CD4-positive, alpha-beta memory T cell (primary cell): ENCODE measurements at regions of chr3 and their contacts with region 1.

Region 1: GRCh38 chr3:111668912-111669488 is 73.9 kb upstream of the ZBED2 start:
- DNase-seq: peak in 4 of 5 donors; percentile 55 to 60 (median 58)
- H3K4me3 ChIP-seq: no peak overlapping the region
- H3K4me3 Mint-ChIP-seq: peak overlapping the region in 5 of 8 donors; percentile 26 to 74 (median 38)
- H3K27ac ChIP-seq: peak overlapping the region; percentile 18
- H3K27ac Mint-ChIP-seq: peak overlapping the region; percentile 24 to 93 (median 87)
- H3K4me1 ChIP-seq: peaks cover 68% of the 10 kb centered on the region
- H3K4me1 Mint-ChIP-seq: peaks cover 51 to 84% (median 67%) of the 10 kb centered on the region in 4 donors
- H3K27me3 ChIP-seq: no peaks in the 10 kb centered on the region
- H3K27me3 Mint-ChIP-seq: no peaks in the 10 kb centered on the region

Region 2: DNA sequence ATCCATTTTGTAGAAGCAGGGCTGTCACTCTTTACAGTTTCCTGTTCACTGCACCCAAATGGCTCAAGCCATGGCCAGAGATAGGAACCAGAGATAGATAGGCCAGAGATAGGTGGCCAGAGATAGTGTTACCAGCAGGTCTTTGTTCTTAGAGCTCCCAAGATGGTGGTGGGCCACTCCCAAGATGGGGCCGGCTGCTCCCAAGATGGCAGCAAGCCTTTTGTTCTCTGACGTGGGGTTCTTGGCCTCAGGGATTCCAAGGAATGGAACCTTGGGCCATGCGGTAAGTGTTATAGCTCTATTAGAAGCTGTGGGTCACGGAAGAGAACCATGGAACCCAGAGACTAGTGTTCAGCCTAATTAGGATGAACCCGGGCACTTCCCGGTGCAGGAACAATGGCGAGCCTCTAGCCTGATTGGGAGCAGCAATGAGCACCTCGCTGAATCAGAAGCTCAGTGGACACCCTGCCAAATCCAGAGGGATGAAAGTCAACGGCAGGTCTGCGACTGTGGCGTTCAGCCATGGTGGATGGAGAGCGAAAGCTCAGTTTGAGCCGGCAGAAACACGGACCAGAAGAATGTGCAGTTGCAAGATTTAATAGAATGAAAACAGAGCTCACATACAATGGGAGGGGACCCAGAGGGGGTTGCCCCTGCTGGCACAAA is 172.0 kb before region 1 on chr3:
- CTCF ChIA-PET with region 1: no interaction called
- POLR2A ChIA-PET with region 1: no interaction called
- intact Hi-C with region 1: no loop called
- DNase-seq: no peak
- H3K4me3 ChIP-seq: no peak overlapping the region
- H3K4me3 Mint-ChIP-seq: no peak overlapping the region
- H3K27ac ChIP-seq: no peak overlapping the region
- H3K27ac Mint-ChIP-seq: peak overlapping the region in 1 of 7 donors; percentile 29
- H3K4me1 ChIP-seq: no peaks in the 10 kb centered on the region
- H3K4me1 Mint-ChIP-seq: no peaks in the 10 kb centered on the region
- H3K27me3 ChIP-seq: no peaks in the 10 kb centered on the region
- H3K27me3 Mint-ChIP-seq: no peaks in the 10 kb centered on the region

Region 3: DNA sequence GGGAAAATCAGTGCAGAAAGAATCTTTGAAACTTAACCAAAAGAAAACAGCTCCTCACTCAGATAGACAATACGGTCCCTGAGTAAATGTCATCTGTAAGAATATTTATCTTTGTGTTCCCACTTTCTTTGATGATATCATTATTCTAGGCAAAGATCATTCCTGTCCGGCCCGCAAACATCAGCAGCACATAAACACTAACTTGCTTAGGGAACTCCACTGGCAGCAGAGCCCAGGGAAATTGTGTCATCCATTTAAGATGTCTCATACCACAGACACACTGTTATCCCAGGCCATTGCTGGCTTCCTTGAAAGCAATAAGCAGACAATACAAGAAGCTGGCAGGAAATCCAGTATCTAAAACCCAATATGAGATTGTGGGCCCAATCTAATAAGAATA is 147.1 kb before region 1 on chr3:
- CTCF ChIA-PET with region 1: no interaction called
- POLR2A ChIA-PET with region 1: no interaction called
- intact Hi-C with region 1: no loop called
- DNase-seq: no peak
- H3K4me3 ChIP-seq: no peak overlapping the region
- H3K4me3 Mint-ChIP-seq: no peak overlapping the region
- H3K27ac ChIP-seq: no peak overlapping the region
- H3K27ac Mint-ChIP-seq: no peak overlapping the region
- H3K4me1 ChIP-seq: no peaks in the 10 kb centered on the region
- H3K4me1 Mint-ChIP-seq: peaks cover 0 to 2% (median under 1%) of the 10 kb centered on the region in 4 donors
- H3K27me3 ChIP-seq: no peaks in the 10 kb centered on the region
- H3K27me3 Mint-ChIP-seq: no peaks in the 10 kb centered on the region

Region 4: GRCh38 chr3:111577794-111578685 is 91.0 kb before region 1 on chr3:
- CTCF ChIA-PET with region 1: interaction called, 11 read pairs
- POLR2A ChIA-PET with region 1: no interaction called
- intact Hi-C with region 1: no loop called
- DNase-seq: peak in 4 of 5 donors; percentile 10 to 28 (median 20)
- H3K4me3 ChIP-seq: no peak overlapping the region
- H3K4me3 Mint-ChIP-seq: peak overlapping the region in 1 of 8 donors; percentile 6
- H3K27ac ChIP-seq: no peak overlapping the region
- H3K27ac Mint-ChIP-seq: peak overlapping the region in 6 of 7 donors; percentile 0 to 73 (median 46)
- H3K4me1 ChIP-seq: peaks cover 10% of the 10 kb centered on the region
- H3K4me1 Mint-ChIP-seq: peaks cover 31 to 60% (median 45%) of the 10 kb centered on the region in 4 donors
- H3K27me3 ChIP-seq: no peaks in the 10 kb centered on the region
- H3K27me3 Mint-ChIP-seq: no peaks in the 10 kb centered on the region

Region 5: DNA sequence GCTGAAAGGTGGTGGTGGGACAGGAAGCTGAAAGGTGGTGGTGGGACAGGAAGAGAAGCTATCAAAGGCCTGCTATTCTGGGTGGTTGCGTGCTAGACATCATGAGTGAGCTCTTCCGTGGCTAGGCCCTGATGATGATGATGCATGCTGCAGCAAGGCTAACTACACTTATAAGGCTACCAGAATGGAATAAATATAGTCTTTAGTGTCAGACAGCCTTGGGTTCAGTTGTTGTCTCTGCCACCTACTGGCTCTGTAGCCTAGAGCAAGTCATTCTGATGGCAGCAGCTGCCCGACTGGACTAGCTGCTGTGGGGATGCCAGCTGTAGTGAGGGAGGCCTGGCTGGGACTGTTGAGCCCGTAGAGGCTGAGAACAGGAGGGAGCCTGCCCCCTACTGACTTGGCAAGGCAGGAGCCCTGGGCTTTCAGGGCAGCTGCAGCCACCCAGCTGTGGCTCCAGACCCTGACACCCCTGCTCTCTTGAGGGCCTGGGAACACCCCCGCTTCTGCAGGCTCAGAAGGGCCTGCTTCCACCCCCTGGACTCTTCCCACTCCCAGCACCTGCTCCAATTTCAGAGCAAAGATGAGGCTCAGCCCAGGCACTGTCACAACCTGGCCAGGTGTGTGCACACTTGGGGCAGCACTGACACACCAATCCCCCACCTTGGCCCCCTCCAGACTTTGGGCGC is 52.4 kb before region 1 on chr3:
- CTCF ChIA-PET with region 1: interaction called, 32 read pairs
- POLR2A ChIA-PET with region 1: interaction called, 24 read pairs
- intact Hi-C with region 1: no loop called
- DNase-seq: peak; percentile 60 to 85 (median 71)
- H3K4me3 ChIP-seq: no peak overlapping the region
- H3K4me3 Mint-ChIP-seq: peak overlapping the region in 7 of 8 donors; percentile 43 to 73 (median 62)
- H3K27ac ChIP-seq: peak overlapping the region; percentile 53
- H3K27ac Mint-ChIP-seq: peak overlapping the region; percentile 89 to 98 (median 92)
- H3K4me1 ChIP-seq: peaks cover 43% of the 10 kb centered on the region
- H3K4me1 Mint-ChIP-seq: peaks cover 41 to 65% (median 50%) of the 10 kb centered on the region in 4 donors
- H3K27me3 ChIP-seq: no peaks in the 10 kb centered on the region
- H3K27me3 Mint-ChIP-seq: no peaks in the 10 kb centered on the region

Region 6: DNA sequence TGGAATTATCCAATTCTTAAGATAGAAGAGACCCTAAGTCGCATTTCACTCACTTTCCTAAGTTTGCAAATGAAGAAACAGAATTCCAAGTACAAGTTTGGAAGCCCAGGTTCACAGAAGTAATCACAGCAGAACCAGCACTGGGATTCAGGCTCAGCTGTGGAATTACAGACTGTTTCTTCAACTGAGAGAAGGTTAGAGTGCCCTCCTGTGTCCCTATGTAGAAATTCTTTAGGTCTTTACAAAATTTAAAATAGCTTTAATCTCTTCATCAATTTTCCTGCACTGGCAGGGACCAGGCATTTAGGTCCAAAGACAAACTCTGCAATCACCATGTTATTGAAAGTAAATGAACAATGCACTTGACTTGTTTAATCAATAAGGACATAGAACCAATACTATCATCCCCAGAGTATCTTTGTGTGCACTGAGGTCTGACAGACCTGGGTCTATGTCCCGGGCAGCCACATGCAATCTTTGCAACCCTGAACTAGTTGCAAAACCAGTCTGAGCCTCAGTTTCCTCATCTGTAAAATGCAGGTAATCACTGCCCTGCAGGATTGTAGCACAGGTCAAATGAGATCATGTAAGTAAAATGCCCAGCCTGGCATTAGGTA is 22.4 kb after region 1 on chr3:
- CTCF ChIA-PET with region 1: interaction called, 12 read pairs
- POLR2A ChIA-PET with region 1: interaction called, 8 read pairs
- intact Hi-C with region 1: loop called (anchors 1 kb)
- DNase-seq: peak in 2 of 5 donors; percentile 27 to 30
- H3K4me3 ChIP-seq: no peak overlapping the region
- H3K4me3 Mint-ChIP-seq: no peak overlapping the region
- H3K27ac ChIP-seq: no peak overlapping the region
- H3K27ac Mint-ChIP-seq: peak overlapping the region in 2 of 7 donors; percentile 23 to 45
- H3K4me1 ChIP-seq: peaks cover 19% of the 10 kb centered on the region
- H3K4me1 Mint-ChIP-seq: peaks cover 32 to 51% (median 39%) of the 10 kb centered on the region in 4 donors
- H3K27me3 ChIP-seq: no peaks in the 10 kb centered on the region
- H3K27me3 Mint-ChIP-seq: no peaks in the 10 kb centered on the region

Region 7: DNA sequence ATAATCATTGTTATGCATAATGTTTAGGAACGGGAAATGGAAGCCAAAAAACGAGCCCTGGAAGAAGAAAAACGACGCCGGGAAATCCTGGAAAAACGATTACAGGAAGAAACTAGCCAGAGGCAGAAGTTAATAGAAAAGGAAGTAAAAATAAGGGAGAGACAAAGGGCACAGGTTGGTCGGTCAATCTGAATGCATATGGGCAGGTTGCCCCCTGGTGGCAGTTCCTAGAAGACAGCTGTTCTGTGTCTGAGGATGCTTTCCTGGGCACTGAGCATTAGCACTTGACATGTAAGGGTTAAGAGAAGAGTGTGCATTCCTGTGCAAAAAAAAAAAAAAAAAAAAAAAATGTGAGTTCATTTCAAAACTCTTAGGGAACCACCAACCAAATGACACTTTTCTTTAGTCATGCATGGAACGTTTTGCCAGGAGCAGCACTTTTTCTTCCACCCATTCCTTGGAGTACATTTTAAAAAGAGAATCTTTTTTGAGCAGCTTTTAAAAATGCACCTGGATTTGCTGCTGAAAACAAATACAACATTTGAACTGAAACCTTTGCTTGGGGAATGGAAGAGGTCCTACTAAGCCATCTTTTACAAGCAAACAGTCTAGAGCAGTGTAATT is 298.8 kb after region 1 on chr3:
- CTCF ChIA-PET with region 1: no interaction called
- POLR2A ChIA-PET with region 1: interaction called, 6 read pairs
- intact Hi-C with region 1: loop called (anchors 1 kb)
- DNase-seq: peak; percentile 69 to 77 (median 69)
- H3K4me3 ChIP-seq: no peak overlapping the region
- H3K4me3 Mint-ChIP-seq: peak overlapping the region in 1 of 8 donors; percentile 11
- H3K27ac ChIP-seq: no peak overlapping the region
- H3K27ac Mint-ChIP-seq: peak overlapping the region in 2 of 7 donors; percentile 43 to 44
- H3K4me1 ChIP-seq: no peaks in the 10 kb centered on the region
- H3K4me1 Mint-ChIP-seq: peaks cover 2 to 6% (median 4%) of the 10 kb centered on the region in 4 donors
- H3K27me3 ChIP-seq: no peaks in the 10 kb centered on the region
- H3K27me3 Mint-ChIP-seq: no peaks in the 10 kb centered on the region

Region 8: DNA sequence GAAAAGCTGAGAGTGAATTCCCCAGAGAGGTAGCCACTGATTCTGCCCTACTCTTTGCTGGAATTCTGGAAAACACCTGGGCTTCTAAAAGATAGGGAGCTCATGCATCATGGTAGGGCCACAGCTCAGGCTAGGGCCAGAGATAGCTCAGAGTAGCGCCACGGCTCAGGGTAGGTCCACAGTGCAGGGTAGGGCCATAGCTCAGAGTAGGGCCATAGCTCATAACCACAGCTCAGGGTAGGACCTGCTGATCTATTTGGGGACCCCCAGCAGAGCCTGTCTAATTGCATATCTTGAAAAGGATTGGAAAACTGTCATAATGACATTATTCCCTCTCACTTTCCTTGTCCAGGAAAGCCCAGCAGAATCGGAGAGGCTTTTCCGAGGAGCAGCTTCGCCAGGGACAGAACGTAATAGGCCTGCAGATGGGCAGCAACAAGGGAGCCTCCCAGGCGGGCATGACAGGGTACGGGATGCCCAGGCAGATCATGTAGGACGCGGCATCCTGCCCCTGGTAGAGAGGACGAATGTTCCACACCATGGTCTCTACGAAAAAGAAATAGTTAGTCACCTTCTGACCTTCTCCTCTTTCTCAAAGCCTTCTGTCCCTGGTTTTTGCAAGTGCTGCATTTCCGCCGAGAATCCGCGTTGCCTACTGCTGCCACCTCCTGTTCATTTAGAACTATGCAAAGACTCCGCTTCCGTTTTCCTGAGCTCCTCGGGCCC is 344.2 kb after region 1 on chr3:
- CTCF ChIA-PET with region 1: interaction called, 43 read pairs
- POLR2A ChIA-PET with region 1: no interaction called
- intact Hi-C with region 1: loop called (anchors 1 kb)
- DNase-seq: peak; percentile 46 to 54 (median 51)
- H3K4me3 ChIP-seq: peak overlapping the region in 1 of 2 donors; percentile 19
- H3K4me3 Mint-ChIP-seq: peak overlapping the region in 5 of 8 donors; percentile 3 to 51 (median 33)
- H3K27ac ChIP-seq: no peak overlapping the region
- H3K27ac Mint-ChIP-seq: peak overlapping the region in 3 of 7 donors; percentile 4 to 57 (median 56)
- H3K4me1 ChIP-seq: peaks cover 4% of the 10 kb centered on the region
- H3K4me1 Mint-ChIP-seq: peaks cover 5 to 12% (median 8%) of the 10 kb centered on the region in 4 donors
- H3K27me3 ChIP-seq: no peaks in the 10 kb centered on the region
- H3K27me3 Mint-ChIP-seq: no peaks in the 10 kb centered on the region

Region 9: DNA sequence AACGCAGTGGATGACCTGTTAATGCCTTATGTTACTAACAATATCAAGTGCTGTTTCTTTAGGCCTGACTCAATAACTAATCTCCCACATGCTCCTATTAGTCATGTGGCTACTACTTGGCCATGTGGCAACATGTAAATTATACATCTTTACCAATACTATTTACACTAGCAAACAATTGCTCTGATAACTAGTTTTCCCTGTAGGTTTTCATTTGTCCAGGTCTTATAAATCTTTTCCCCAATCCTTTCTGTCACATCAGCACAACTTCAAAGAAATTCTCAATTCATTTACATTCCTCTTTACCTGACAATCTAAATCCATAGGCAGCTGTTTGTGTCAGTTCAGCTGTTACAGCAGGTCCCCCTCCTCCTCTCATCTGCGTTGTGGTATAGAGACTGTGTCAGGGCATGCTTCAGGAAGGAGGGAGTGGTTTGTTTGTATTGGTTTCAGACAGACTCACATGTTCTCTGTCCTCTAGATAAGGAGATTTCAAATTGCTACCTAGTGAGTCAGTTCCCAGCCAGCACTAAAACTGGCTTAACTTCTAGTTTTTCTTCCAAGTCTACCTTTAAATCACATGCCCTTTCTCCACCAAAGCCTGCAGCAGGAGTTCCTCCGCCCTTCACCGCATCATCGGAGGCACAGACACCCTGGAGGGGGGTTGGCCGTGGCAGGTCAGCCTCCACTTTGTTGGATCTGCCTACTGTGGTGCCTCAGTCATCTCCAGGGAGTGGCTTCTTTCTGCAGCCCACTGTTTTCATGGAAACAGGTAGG is 405.9 kb after region 1 on chr3:
- CTCF ChIA-PET with region 1: no interaction called
- POLR2A ChIA-PET with region 1: no interaction called
- intact Hi-C with region 1: no loop called
- DNase-seq: peak; percentile 38 to 68 (median 61)
- H3K4me3 ChIP-seq: no peak overlapping the region
- H3K4me3 Mint-ChIP-seq: peak overlapping the region; percentile 37 to 82 (median 72)
- H3K27ac ChIP-seq: peak overlapping the region; percentile 21
- H3K27ac Mint-ChIP-seq: peak overlapping the region; percentile 65 to 93 (median 83)
- H3K4me1 ChIP-seq: peaks cover 35% of the 10 kb centered on the region
- H3K4me1 Mint-ChIP-seq: peaks cover 28 to 60% (median 40%) of the 10 kb centered on the region in 4 donors
- H3K27me3 ChIP-seq: no peaks in the 10 kb centered on the region
- H3K27me3 Mint-ChIP-seq: no peaks in the 10 kb centered on the region